ENCODE measurements at regions of chr1 and their contacts with region 1.

Region 1: DNA sequence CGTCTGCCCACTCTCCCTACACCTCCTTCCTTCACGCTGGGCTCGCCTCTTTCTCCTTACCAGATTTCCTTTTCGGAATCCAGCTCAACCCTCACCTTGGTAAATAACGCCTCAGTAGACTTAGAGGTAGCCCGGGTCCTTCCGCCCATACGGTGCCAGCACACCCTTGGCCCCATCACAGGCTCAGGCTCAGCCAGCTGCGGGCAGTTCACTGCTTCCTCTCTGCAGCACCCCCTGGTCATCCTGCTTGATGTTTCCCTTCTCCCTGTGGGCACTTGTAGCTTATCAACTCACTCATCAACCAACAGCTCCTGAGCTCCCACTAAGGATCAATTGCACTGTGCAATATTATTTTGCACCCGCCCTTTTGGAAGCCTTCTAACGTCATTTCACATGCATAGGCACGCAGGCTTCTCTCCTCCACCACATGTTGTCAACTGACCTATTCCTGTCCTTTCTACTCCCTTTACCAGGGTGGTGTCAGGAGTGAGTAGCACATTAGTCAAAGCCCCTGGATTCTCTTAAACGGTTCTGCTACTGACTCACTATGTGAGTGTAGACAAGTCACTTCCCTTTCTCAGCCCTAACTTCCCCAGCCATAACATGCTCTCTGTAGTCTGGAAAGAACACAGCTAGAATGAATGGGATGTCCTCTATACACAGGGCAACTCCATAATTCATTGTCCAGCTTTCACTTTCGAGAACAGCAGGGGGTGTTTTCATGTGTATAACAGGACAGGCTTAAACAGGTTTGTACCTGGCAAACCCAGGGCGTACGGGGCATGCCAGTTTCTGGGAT is 47.1 kb upstream of the IRF2BP2 start:
- DNase-seq: peak; percentile 50 to 95
- H3K4me3 ChIP-seq: peak overlapping the region; percentile 69
- H3K27ac ChIP-seq: peak overlapping the region; percentile 99
- H3K4me1 ChIP-seq: peaks cover 59% of the 10 kb centered on the region
- H3K27me3 ChIP-seq: no peaks in the 10 kb centered on the region
- CTCF ChIP-seq: no peak

Region 2: GRCh38 chr1:234631721-234632125 is 25.3 kb before region 1 on chr1:
- CTCF ChIA-PET with region 1: no interaction called
- POLR2A ChIA-PET with region 1: interaction called, 9 read pairs
- intact Hi-C with region 1: loop called (anchors 2 kb)
- DNase-seq: peak; percentile 77 to 97
- H3K4me3 ChIP-seq: no peak overlapping the region
- H3K27ac ChIP-seq: peak overlapping the region; percentile 88
- H3K4me1 ChIP-seq: peaks cover 38% of the 10 kb centered on the region
- H3K27me3 ChIP-seq: no peaks in the 10 kb centered on the region
- CTCF ChIP-seq: no peak

Region 3: DNA sequence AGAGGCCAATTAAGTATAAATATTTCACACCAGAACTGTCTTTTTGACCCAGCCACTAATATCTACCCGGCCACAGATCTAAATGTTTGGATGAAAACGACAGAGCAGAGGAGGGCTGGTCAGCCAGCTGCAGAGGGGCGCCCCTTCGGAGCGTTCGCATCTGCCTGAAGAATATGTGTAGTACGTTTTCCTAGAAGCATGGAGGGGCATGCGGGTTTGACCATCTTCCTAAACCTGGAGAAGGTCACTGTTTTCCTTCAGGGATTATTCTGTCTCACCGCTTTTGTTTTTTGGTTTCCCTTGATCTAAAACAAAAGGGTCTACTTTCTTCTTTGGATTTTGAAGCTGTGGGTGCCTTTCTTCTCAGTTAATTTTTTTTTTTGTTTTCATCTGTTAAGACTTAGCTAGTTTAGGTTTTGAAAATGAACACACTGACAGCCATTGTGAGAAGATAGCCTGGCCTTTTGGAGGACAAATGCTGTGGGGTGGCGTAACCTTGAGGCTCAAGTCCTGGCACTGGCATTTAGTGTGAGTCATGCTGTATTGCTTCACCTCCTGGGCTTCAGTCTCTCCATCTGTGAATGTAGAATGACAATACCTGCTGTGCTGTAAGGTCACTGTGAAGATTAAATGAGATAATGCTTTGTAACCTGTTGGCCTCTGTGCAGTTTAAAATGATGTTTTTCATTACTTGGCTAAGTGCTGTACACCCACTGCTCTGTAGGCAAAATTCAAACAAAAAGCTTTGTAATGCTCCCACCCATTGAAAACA is 27.0 kb after region 1 on chr1:
- CTCF ChIA-PET with region 1: no interaction called
- POLR2A ChIA-PET with region 1: no interaction called
- intact Hi-C with region 1: loop called (anchors 1 kb)
- DNase-seq: peak; percentile 56 to 82
- H3K4me3 ChIP-seq: 0 out of 2 replicates have a peak overlapping the region, but pooled peaks have one; percentile 3
- H3K27ac ChIP-seq: peak overlapping the region; percentile 10
- H3K4me1 ChIP-seq: peaks cover 17% of the 10 kb centered on the region
- H3K27me3 ChIP-seq: no peaks in the 10 kb centered on the region
- CTCF ChIP-seq: no peak

Region 4: DNA sequence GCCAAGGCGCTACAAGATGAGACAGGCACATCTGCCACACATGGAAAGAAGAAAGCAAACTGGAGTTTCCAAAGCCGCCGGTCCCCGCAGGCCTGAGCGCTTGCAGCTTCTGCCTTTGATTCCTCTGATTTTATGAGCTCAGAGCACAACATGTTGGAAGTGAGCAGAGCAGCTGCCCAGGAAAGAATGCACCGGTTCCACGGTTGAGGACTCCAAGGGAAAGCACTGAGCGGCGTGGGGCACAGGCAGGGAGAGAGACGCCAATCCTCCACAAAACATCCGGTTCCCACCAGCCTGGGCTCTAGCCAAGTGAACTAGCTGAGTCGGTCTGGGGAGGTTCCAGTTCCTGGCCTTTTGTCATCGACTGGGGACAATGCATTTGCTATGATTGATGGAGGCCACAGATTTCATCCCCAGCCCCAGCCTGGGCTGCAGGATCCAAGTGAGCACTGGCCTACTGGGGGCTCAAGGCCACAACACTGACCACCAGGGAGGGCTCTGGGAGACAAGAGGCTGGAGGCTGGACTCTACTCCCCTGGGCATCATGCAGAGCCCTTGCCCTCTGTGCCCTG is 206.0 kb after region 1 on chr1:
- CTCF ChIA-PET with region 1: no interaction called
- POLR2A ChIA-PET with region 1: no interaction called
- intact Hi-C with region 1: loop called (anchors 2 kb)
- DNase-seq: no peak
- H3K4me3 ChIP-seq: no peak overlapping the region
- H3K27ac ChIP-seq: no peak overlapping the region
- H3K4me1 ChIP-seq: peaks cover 56% of the 10 kb centered on the region
- H3K27me3 ChIP-seq: no peaks in the 10 kb centered on the region
- CTCF ChIP-seq: no peak

Region 5: GRCh38 chr1:234978397-234979295 is 321.6 kb after region 1 on chr1:
- CTCF ChIA-PET with region 1: no interaction called
- POLR2A ChIA-PET with region 1: interaction called, 3 read pairs
- intact Hi-C with region 1: loop called (anchors 5 kb)
- DNase-seq: peak; percentile 45 to 93
- H3K4me3 ChIP-seq: peak overlapping the region; percentile 30; the same call in 1 of the 2 replicates
- H3K27ac ChIP-seq: peak overlapping the region; percentile 99
- H3K4me1 ChIP-seq: peaks cover 99% of the 10 kb centered on the region
- H3K27me3 ChIP-seq: no peaks in the 10 kb centered on the region
- CTCF ChIP-seq: no peak

Region 6: DNA sequence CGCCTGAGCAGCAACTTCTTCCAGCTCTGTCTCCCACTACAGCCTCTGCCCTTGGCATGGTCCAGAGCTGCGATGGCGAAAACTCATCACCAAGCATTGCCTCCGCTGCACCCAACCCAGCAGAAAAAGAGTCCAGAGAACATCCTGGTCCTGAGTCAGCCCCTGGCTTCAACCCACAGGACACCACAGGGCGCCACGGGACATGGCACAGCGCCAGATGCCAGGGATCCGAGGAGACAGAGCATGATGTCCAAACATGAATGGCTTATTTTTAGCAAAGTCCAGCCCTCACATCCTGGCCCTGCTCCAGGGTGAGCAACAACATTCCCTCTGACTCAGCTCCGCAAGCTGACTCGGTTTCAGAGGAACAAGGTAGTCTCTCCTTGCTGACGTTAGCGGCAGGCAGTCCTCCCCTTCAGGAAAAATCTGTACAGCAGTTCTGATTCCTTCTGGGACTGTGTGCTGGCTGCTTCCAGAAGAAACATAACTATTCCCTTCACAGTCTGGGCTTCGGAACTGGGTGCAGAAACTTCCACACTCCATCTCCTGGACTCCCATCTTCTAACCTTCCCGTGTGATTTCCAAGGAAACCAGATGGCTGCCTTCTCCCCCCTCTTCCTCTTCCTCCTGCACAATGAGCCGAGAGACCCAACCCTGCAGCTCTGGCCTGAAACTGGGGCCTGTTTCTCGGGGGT is 340.3 kb after region 1 on chr1:
- CTCF ChIA-PET with region 1: no interaction called
- POLR2A ChIA-PET with region 1: no interaction called
- intact Hi-C with region 1: loop called (anchors 5 kb)
- DNase-seq: peak; percentile 99 to 100
- H3K4me3 ChIP-seq: peak overlapping the region; percentile 45
- H3K27ac ChIP-seq: peak overlapping the region; percentile 100
- H3K4me1 ChIP-seq: peaks cover 34% of the 10 kb centered on the region
- H3K27me3 ChIP-seq: no peaks in the 10 kb centered on the region
- CTCF ChIP-seq: no peak

Region 7: GRCh38 chr1:235038701-235039100 is 381.6 kb after region 1 on chr1:
- CTCF ChIA-PET with region 1: no interaction called
- POLR2A ChIA-PET with region 1: interaction called, 14 read pairs
- intact Hi-C with region 1: no loop called
- DNase-seq: no peak
- H3K4me3 ChIP-seq: no peak overlapping the region
- H3K27ac ChIP-seq: no peak overlapping the region
- H3K4me1 ChIP-seq: no peaks in the 10 kb centered on the region
- H3K27me3 ChIP-seq: no peaks in the 10 kb centered on the region
- CTCF ChIP-seq: no peak

Region 8: GRCh38 chr1:235181561-235182245 is 524.6 kb after region 1 on chr1:
- CTCF ChIA-PET with region 1: no interaction called
- POLR2A ChIA-PET with region 1: no interaction called
- intact Hi-C with region 1: no loop called
- DNase-seq: no peak
- H3K4me3 ChIP-seq: no peak overlapping the region
- H3K27ac ChIP-seq: no peak overlapping the region
- H3K4me1 ChIP-seq: no peaks in the 10 kb centered on the region
- H3K27me3 ChIP-seq: no peaks in the 10 kb centered on the region
- CTCF ChIP-seq: no peak